B cell (primary cell): ENCODE measurements at regions of chr20 and their contacts with region 1.

Region 1: DNA sequence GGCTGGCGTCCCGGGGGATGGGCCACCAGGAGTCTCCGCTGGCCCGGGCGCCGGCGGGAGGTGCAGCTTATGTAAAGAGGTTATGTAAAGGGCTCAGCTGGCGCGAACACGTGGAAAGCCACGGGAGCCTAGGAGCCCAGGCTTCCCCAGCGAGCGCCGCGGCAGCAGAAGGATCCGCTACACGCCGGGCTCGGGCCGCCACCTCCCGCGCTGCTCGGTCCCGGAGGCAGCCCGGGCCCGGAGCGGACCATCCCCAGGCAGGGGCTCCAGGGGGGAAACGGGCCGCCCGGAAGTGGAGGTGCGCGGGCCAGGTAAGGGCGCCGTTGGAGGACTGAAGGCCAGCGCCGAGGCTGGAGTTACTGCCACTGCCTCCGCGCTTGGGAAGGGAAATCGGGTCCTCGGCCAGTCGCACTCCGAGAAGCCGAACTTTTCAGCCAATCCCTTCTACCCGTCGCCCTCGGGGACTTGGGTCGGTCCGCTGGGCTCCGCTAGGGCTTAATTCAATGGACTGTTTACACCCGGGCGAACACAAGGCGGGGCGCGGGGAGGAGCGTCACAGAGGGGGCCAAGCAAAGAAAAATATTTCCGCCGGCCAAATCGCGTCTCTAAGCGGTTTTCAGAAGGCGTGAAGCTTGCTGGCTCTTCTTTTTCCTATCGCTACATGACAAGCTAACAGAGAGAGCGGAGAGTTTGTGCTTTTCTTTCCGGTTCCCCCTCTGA is 398 bp downstream of the STK35 start:
- DNase-seq: peak; percentile 98
- ATAC-seq: peak; percentile 79
- H3K4me3 ChIP-seq: peak overlapping the region; percentile 71 to 92 (median 83)
- H3K4me3 Mint-ChIP-seq: peak overlapping the region; percentile 96
- H3K27ac ChIP-seq: peak overlapping the region; percentile 100
- H3K27ac Mint-ChIP-seq: peak overlapping the region; percentile 100
- H3K4me1 ChIP-seq: peaks cover 28 to 32% of the 10 kb centered on the region in 2 donors
- H3K4me1 Mint-ChIP-seq: peaks cover 44% of the 10 kb centered on the region
- H3K27me3 ChIP-seq: no peaks in the 10 kb centered on the region
- H3K27me3 Mint-ChIP-seq: no peaks in the 10 kb centered on the region
- CTCF ChIP-seq: no peak

Region 2: GRCh38 chr20:833450-834150 is 1268.4 kb before region 1 on chr20 and contains the start of gene FAM110A:
- CTCF ChIA-PET with region 1: no interaction called
- POLR2A ChIA-PET with region 1: no interaction called
- intact Hi-C with region 1: loop called (anchors 5 kb)
- DNase-seq: peak; percentile 98
- ATAC-seq: peak; percentile 93
- H3K4me3 ChIP-seq: peak within 1 kb of the TSS; percentile 72 to 95 (median 88)
- H3K4me3 Mint-ChIP-seq: peak within 1 kb of the TSS; percentile 81
- H3K27ac ChIP-seq: peak within 1 kb of the TSS; percentile 81 to 96
- H3K27ac Mint-ChIP-seq: peak within 1 kb of the TSS; percentile 87
- H3K4me1 ChIP-seq: peaks cover 31% of the 10 kb centered on the region in 2 donors
- H3K4me1 Mint-ChIP-seq: peaks cover 37% of the 10 kb centered on the region
- H3K27me3 ChIP-seq: no peaks in the 10 kb centered on the region
- H3K27me3 Mint-ChIP-seq: no peaks in the 10 kb centered on the region
- CTCF ChIP-seq: no peak
- total RNA-seq, gene FAM110A: 18.4 and 19.6 TPM in 2 replicates

Region 3: GRCh38 chr20:1952737-1953530 is 149.1 kb before region 1 on chr20:
- CTCF ChIA-PET with region 1: no interaction called
- POLR2A ChIA-PET with region 1: interaction called, 16 read pairs
- intact Hi-C with region 1: loop called (anchors 1 kb)
- DNase-seq: peak; percentile 48
- ATAC-seq: peak; percentile 25
- H3K4me3 ChIP-seq: peak overlapping the region in 2 of 5 experiments; percentile 4 to 42
- H3K4me3 Mint-ChIP-seq: peak overlapping the region; percentile 65
- H3K27ac ChIP-seq: peak overlapping the region; percentile 83 to 87
- H3K27ac Mint-ChIP-seq: peak overlapping the region; percentile 89
- H3K4me1 ChIP-seq: peaks cover 36 to 43% of the 10 kb centered on the region in 2 donors
- H3K4me1 Mint-ChIP-seq: peaks cover 40% of the 10 kb centered on the region
- H3K27me3 ChIP-seq: no peaks in the 10 kb centered on the region
- H3K27me3 Mint-ChIP-seq: peaks cover under 1% of the 10 kb centered on the region
- CTCF ChIP-seq: no peak

Region 4: GRCh38 chr20:2005831-2006426 is 96.1 kb before region 1 on chr20:
- CTCF ChIA-PET with region 1: interaction called, 3 read pairs
- POLR2A ChIA-PET with region 1: no interaction called
- intact Hi-C with region 1: loop called (anchors 5 kb)
- DNase-seq: peak; percentile 77
- ATAC-seq: no peak
- H3K4me3 ChIP-seq: no peak overlapping the region
- H3K4me3 Mint-ChIP-seq: no peak overlapping the region
- H3K27ac ChIP-seq: no peak overlapping the region
- H3K27ac Mint-ChIP-seq: no peak overlapping the region
- H3K4me1 ChIP-seq: no peaks in the 10 kb centered on the region
- H3K4me1 Mint-ChIP-seq: no peaks in the 10 kb centered on the region
- H3K27me3 ChIP-seq: peaks cover 0 to 30% (median 11%) of the 10 kb centered on the region in 4 experiments
- H3K27me3 Mint-ChIP-seq: peaks cover 45% of the 10 kb centered on the region
- CTCF ChIP-seq: no peak

Region 5: GRCh38 chr20:2301164-2301622 is 199.2 kb after region 1 on chr20:
- CTCF ChIA-PET with region 1: no interaction called
- POLR2A ChIA-PET with region 1: no interaction called
- intact Hi-C with region 1: loop called (anchors 1 kb)
- DNase-seq: peak; percentile 89
- ATAC-seq: peak; percentile 95
- H3K4me3 ChIP-seq: peak overlapping the region in 2 of 5 experiments; percentile 2 to 27
- H3K4me3 Mint-ChIP-seq: peak overlapping the region; percentile 61
- H3K27ac ChIP-seq: peak overlapping the region; percentile 82 to 91
- H3K27ac Mint-ChIP-seq: peak overlapping the region; percentile 93
- H3K4me1 ChIP-seq: peaks cover 23 to 24% of the 10 kb centered on the region in 2 donors
- H3K4me1 Mint-ChIP-seq: peaks cover 22% of the 10 kb centered on the region
- H3K27me3 ChIP-seq: peaks cover 0 to 6% (median 0%) of the 10 kb centered on the region in 4 experiments
- H3K27me3 Mint-ChIP-seq: no peaks in the 10 kb centered on the region
- CTCF ChIP-seq: no peak